ENCODE measurements at regions of chr3 and their contacts with region 1.

Region 1: GRCh38 chr3:44198284-44199269 is 43.1 kb upstream of the TOPAZ1 start:
- DNase-seq: peak; percentile 76
- ATAC-seq: peak; percentile 70
- H3K4me3 ChIP-seq: no peak overlapping the region
- H3K4me3 Mint-ChIP-seq: no peak overlapping the region
- H3K27ac ChIP-seq: no peak overlapping the region
- H3K27ac Mint-ChIP-seq: no peak overlapping the region
- H3K4me1 ChIP-seq: no peaks in the 10 kb centered on the region
- H3K4me1 Mint-ChIP-seq: no peaks in the 10 kb centered on the region
- H3K27me3 ChIP-seq: peaks cover 0 to 5% (median 1%) of the 10 kb centered on the region in 4 experiments
- H3K27me3 Mint-ChIP-seq: peaks cover 12% of the 10 kb centered on the region
- CTCF ChIP-seq: peak; percentile 90

Region 2: GRCh38 chr3:42961633-42962032 is 1236.9 kb before region 1 on chr3:
- CTCF ChIA-PET with region 1: interaction called, 3 read pairs
- POLR2A ChIA-PET with region 1: no interaction called
- intact Hi-C with region 1: loop called (anchors 5 kb)
- DNase-seq: peak; percentile 18
- ATAC-seq: no peak
- H3K4me3 ChIP-seq: no peak overlapping the region
- H3K4me3 Mint-ChIP-seq: no peak overlapping the region
- H3K27ac ChIP-seq: no peak overlapping the region
- H3K27ac Mint-ChIP-seq: no peak overlapping the region
- H3K4me1 ChIP-seq: no peaks in the 10 kb centered on the region
- H3K4me1 Mint-ChIP-seq: no peaks in the 10 kb centered on the region
- H3K27me3 ChIP-seq: no peaks in the 10 kb centered on the region
- H3K27me3 Mint-ChIP-seq: peaks cover 28% of the 10 kb centered on the region
- CTCF ChIP-seq: peak; percentile 39

Region 3: GRCh38 chr3:43695443-43695842 is 503.1 kb before region 1 on chr3:
- CTCF ChIA-PET with region 1: no interaction called
- POLR2A ChIA-PET with region 1: no interaction called
- intact Hi-C with region 1: no loop called
- DNase-seq: no peak
- ATAC-seq: no peak
- H3K4me3 ChIP-seq: no peak overlapping the region
- H3K4me3 Mint-ChIP-seq: no peak overlapping the region
- H3K27ac ChIP-seq: no peak overlapping the region
- H3K27ac Mint-ChIP-seq: no peak overlapping the region
- H3K4me1 ChIP-seq: peaks cover 5 to 12% of the 10 kb centered on the region in 2 donors
- H3K4me1 Mint-ChIP-seq: peaks cover 23% of the 10 kb centered on the region
- H3K27me3 ChIP-seq: no peaks in the 10 kb centered on the region
- H3K27me3 Mint-ChIP-seq: no peaks in the 10 kb centered on the region
- CTCF ChIP-seq: no peak

Region 4: DNA sequence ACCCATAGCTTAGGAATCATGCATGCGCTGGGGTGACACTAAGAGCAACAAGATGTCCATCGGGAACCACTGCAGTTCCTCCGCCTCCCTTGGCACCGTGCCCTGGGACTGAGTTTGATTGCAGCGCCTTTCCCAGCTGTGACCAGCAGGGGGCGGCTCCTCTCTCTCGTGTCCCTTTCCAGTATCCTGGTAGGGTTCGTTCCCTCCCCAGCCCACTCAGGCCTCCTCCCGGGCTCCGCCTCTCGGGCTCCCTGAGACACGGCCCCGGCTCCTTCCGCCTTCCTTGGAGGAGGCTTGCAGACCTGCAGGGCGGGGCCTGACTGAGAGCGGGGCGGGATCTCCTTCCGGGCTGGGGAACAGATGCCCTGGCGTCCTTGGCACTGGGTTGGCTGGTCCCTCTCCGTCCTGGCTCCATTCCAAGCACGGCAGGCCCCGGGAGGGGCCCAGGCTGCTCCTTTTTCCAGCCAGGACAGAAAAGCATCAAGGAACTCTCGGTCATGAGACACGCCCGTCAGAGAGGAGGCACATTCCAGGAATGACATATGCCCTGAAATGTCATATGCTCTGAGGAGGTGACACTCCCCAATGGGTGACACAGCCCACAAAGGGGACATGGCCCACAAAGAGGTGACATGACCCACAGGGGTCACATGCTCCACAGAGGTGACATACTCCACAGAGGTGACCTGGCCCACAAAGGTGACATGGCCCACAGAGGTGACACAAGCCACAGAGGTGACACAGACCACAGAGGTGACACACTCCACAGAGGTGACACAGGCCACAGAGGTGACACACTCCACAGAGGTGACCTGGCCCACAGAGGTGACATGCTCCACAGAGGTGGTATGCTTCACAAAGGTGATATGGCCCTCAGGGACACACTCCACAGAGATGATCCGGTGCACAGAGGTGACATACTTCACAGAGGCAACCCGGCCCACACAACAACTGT is 428.8 kb before region 1 on chr3:
- CTCF ChIA-PET with region 1: interaction called, 25 read pairs
- POLR2A ChIA-PET with region 1: no interaction called
- intact Hi-C with region 1: no loop called
- DNase-seq: peak; percentile 68
- ATAC-seq: peak; percentile 76
- H3K4me3 ChIP-seq: no peak overlapping the region
- H3K4me3 Mint-ChIP-seq: no peak overlapping the region
- H3K27ac ChIP-seq: no peak overlapping the region
- H3K27ac Mint-ChIP-seq: no peak overlapping the region
- H3K4me1 ChIP-seq: peaks cover 0 to 5% of the 10 kb centered on the region in 2 donors
- H3K4me1 Mint-ChIP-seq: peaks cover 4% of the 10 kb centered on the region
- H3K27me3 ChIP-seq: peaks cover 0 to 11% (median 2%) of the 10 kb centered on the region in 4 experiments
- H3K27me3 Mint-ChIP-seq: peaks cover 32% of the 10 kb centered on the region
- CTCF ChIP-seq: peak; percentile 86

Region 5: GRCh38 chr3:43879166-43879565 is 319.4 kb before region 1 on chr3:
- CTCF ChIA-PET with region 1: interaction called, 10 read pairs
- POLR2A ChIA-PET with region 1: no interaction called
- intact Hi-C with region 1: loop called (anchors 1 kb)
- DNase-seq: peak; percentile 39
- ATAC-seq: no peak
- H3K4me3 ChIP-seq: no peak overlapping the region
- H3K4me3 Mint-ChIP-seq: no peak overlapping the region
- H3K27ac ChIP-seq: no peak overlapping the region
- H3K27ac Mint-ChIP-seq: no peak overlapping the region
- H3K4me1 ChIP-seq: no peaks in the 10 kb centered on the region
- H3K4me1 Mint-ChIP-seq: no peaks in the 10 kb centered on the region
- H3K27me3 ChIP-seq: no peaks in the 10 kb centered on the region
- H3K27me3 Mint-ChIP-seq: peaks cover 3% of the 10 kb centered on the region
- CTCF ChIP-seq: peak; percentile 37

Region 6: GRCh38 chr3:44184319-44184953 is 14.1 kb before region 1 on chr3:
- CTCF ChIA-PET with region 1: interaction called, 12 read pairs
- POLR2A ChIA-PET with region 1: no interaction called
- intact Hi-C with region 1: no loop called
- DNase-seq: no peak
- ATAC-seq: no peak
- H3K4me3 ChIP-seq: no peak overlapping the region
- H3K4me3 Mint-ChIP-seq: no peak overlapping the region
- H3K27ac ChIP-seq: no peak overlapping the region
- H3K27ac Mint-ChIP-seq: no peak overlapping the region
- H3K4me1 ChIP-seq: peaks cover 4 to 5% of the 10 kb centered on the region in 2 donors
- H3K4me1 Mint-ChIP-seq: peaks cover 7% of the 10 kb centered on the region
- H3K27me3 ChIP-seq: peaks cover 0 to 5% (median 2%) of the 10 kb centered on the region in 4 experiments
- H3K27me3 Mint-ChIP-seq: peaks cover 34% of the 10 kb centered on the region
- CTCF ChIP-seq: no peak

Measured in B cell (primary cell).